H1 (cell line): ENCODE measurements at regions of chr19 and their contacts with region 1.

Region 1: DNA sequence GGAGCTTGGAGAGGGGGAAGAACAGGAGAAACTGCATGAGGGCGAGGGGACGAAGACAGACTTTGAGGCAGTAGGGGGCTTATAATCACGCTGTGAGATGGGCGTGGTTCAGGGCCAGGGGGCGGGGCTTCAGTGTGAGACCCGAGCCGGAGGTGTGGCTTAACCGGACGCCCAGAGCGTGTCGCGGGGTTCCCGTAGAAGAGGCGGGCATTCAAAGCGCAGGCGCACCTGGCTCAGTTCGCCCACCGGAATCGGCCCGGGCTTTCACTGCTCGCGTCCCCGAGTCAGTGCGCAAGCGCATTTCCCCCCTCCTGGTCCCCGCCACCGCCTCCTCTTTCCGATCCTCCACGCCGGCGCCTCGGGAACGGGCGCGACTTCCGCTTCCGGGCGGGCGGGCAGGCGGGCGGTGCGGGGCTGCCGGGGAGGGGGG is 225 bp upstream of the ZNF865 start:
- DNase-seq: peak; percentile 94 to 98
- H3K4me3 ChIP-seq: peak overlapping the region; percentile 54 to 93 (median 68)
- H3K27ac ChIP-seq: peak overlapping the region; percentile 64; the same call in 1 of the 2 replicates
- H3K4me1 ChIP-seq: peaks cover 0 to 14% (median 10%) of the 10 kb centered on the region in 4 experiments; a peak in 6 of 7 replicates
- H3K27me3 ChIP-seq: no peaks in the 10 kb centered on the region
- CTCF ChIP-seq: no peak
- EP300 ChIP-seq: no peak
- POLR2A ChIP-seq: peak; percentile 49 to 71
- RAD21 ChIP-seq: no peak

Region 2: GRCh38 chr19:55452749-55453346 is 152.4 kb before region 1 on chr19:
- CTCF ChIA-PET with region 1: no interaction called
- POLR2A ChIA-PET with region 1: no interaction called
- DNase-seq: peak in 1 of 2 experiments; percentile 95
- H3K4me3 ChIP-seq: peak overlapping the region in 2 of 4 experiments; percentile 26 to 69; a peak in 3 of 8 replicates
- H3K27ac ChIP-seq: no peak overlapping the region
- H3K4me1 ChIP-seq: peaks cover 0 to 5% (median 2%) of the 10 kb centered on the region in 4 experiments; a peak in 5 of 7 replicates
- H3K27me3 ChIP-seq: peaks cover 25 to 45% (median 43%) of the 10 kb centered on the region in 4 experiments
- CTCF ChIP-seq: no peak
- EP300 ChIP-seq: peak in 1 of 2 experiments; percentile 94; a peak in 2 of 3 replicates
- POLR2A ChIP-seq: no peak
- RAD21 ChIP-seq: no peak

Region 3: GRCh38 chr19:55593096-55593772 is 12.0 kb before region 1 on chr19:
- CTCF ChIA-PET with region 1: interaction called, 12 read pairs
- POLR2A ChIA-PET with region 1: interaction called, 18 read pairs
- DNase-seq: no peak
- H3K4me3 ChIP-seq: peak overlapping the region in 2 of 4 experiments; percentile 5 to 48; a peak in 3 of 8 replicates
- H3K27ac ChIP-seq: no peak overlapping the region
- H3K4me1 ChIP-seq: peaks cover 0 to 9% (median 3%) of the 10 kb centered on the region in 4 experiments; a peak in 4 of 7 replicates
- H3K27me3 ChIP-seq: peaks cover 0 to 2% (median 0%) of the 10 kb centered on the region in 4 experiments; a peak in 1 of 7 replicates
- CTCF ChIP-seq: no peak
- EP300 ChIP-seq: no peak
- POLR2A ChIP-seq: no peak
- RAD21 ChIP-seq: no peak

Region 4: DNA sequence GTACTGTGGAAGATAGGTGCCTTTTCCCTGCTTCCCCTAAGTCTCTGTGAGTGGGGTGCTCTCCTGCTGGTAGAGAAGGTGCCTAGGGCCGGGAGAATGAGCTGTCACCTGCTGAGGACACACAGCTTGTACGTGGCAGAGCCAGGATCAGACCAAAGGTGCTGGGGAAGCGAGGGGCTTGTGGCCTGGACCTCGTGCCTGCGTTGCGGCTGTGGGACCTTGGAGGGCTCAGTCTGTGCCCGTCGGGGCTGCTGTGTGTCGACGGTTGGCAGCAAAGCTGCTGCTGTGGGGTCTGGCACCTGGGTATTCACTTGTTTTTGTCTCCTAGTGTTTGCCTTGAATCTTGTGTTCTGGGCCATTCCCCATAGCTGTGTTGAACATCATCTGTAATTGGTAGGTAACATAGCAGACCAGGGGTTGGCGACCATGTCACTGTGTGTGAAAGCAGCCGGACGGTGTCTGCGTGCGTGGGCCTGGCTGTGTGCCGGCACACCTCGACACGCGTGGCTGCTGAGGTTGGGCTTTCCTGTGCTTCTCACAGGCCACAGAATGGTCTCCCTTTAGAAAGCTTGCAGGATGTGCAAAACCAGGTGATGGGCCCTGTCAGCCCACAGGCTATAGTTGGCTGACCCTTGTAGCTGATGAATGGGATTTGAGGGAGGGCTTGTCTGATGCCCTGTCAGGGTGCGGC is 58.8 kb after region 1 on chr19:
- CTCF ChIA-PET with region 1: no interaction called
- POLR2A ChIA-PET with region 1: no interaction called
- DNase-seq: no peak
- H3K4me3 ChIP-seq: no peak overlapping the region
- H3K27ac ChIP-seq: no peak overlapping the region
- H3K4me1 ChIP-seq: no peaks in the 10 kb centered on the region
- H3K27me3 ChIP-seq: no peaks in the 10 kb centered on the region
- CTCF ChIP-seq: no peak
- EP300 ChIP-seq: no peak
- POLR2A ChIP-seq: no peak
- RAD21 ChIP-seq: no peak